ENCODE measurements at regions of chr2 and their contacts with region 1.

Region 1: GRCh38 chr2:219229305-219230058 is at the starts of genes ANKZF1 and ATG9A:
- DNase-seq: peak; percentile 99
- ATAC-seq: peak; percentile 98
- H3K4me3 ChIP-seq: peak within 1 kb of the TSS; percentile 74
- H3K27ac ChIP-seq: peak within 1 kb of the TSS; percentile 88
- H3K4me1 ChIP-seq: peaks cover 27% of the 10 kb centered on the region
- H3K27me3 ChIP-seq: no peaks in the 10 kb centered on the region
- CTCF ChIP-seq: no peak
- total RNA-seq, gene ANKZF1: 37.6 TPM
- total RNA-seq, gene ATG9A: 48.2 TPM

Region 2: DNA sequence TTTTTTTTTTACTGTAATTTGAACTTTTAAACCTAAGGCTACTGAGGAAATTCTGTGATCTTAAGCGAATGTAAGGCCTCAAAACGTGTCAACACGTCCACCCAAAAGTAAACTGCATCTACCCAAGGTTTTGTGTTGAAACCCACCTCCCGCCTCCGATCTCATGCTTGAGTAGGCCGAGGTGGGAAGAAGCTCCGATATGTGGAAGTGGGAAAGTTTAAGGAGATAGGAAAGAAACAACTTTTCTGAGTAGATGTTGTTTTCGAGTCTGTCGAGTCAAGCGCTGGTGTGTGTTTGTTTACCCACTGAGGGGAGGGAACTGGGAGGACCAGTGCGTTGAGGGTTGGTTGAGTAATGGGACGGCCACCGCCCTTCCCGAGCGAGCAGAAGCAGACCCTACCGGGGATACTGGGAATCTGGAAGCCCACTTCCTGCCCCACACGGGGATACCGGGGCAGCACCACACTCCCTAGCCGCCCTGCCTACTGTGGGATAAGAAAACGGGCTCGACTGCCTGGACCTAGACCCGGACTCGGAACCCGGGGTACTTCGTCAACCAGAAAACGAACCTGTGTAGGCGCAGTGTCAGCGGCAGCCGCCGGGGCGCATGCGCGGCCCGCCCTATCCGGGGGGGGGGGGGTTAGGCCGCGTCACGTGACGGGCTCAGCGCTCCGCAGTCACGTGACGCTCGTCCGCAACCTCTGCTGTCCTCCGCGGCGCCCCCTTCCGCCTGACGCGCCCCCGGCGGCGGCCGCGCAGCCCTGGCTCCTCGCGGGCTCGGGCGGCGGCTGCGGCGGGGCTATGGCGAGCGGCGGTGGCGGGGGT is 51.7 kb before region 1 on chr2 and contains the start of gene RETREG2:
- intact Hi-C with region 1: loop called (anchors 10 kb)
- DNase-seq: peak; percentile 92
- ATAC-seq: peak; percentile 82
- H3K4me3 ChIP-seq: peak within 1 kb of the TSS; percentile 73
- H3K27ac ChIP-seq: peak within 1 kb of the TSS; percentile 98
- H3K4me1 ChIP-seq: peaks cover 28% of the 10 kb centered on the region
- H3K27me3 ChIP-seq: no peaks in the 10 kb centered on the region
- CTCF ChIP-seq: peak; percentile 32
- total RNA-seq, gene RETREG2: 79.8 TPM